ENCODE measurements at regions of chr20 and their contacts with region 1.

Region 1: GRCh38 chr20:7094438-7094997 is 327.0 kb downstream of the BMP2 start:
- DNase-seq: peak; percentile 60
- H3K4me3 Mint-ChIP-seq: no peak overlapping the region
- H3K27ac Mint-ChIP-seq: no peak overlapping the region
- H3K4me1 Mint-ChIP-seq: no peaks in the 10 kb centered on the region
- H3K27me3 Mint-ChIP-seq: no peaks in the 10 kb centered on the region
- CTCF ChIP-seq: peak; percentile 57

Region 2: DNA sequence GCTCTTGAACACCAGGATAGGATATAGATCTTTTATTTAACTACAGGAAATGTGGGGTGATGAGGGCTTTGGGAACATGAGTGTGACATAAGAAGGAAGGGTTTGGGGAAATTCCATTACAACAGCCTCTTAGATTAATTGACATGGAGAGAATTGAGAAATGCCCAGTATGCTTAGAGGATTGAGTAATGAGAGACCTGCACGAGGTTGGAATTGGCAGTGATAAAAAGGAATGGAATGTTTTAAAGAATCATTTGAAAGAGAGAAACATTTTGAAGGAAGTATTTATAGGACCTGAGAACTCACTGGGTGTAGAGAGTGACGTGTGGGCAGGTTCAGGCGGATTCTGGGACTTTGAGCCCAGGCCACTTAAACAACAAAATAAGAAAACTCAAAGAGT is 100.1 kb before region 1 on chr20:
- CTCF ChIA-PET with region 1: no interaction called
- intact Hi-C with region 1: loop called (anchors 1 kb)
- DNase-seq: peak; percentile 25
- H3K4me3 Mint-ChIP-seq: peak overlapping the region; percentile 8
- H3K27ac Mint-ChIP-seq: peak overlapping the region; percentile 93
- H3K4me1 Mint-ChIP-seq: peaks cover 35% of the 10 kb centered on the region
- H3K27me3 Mint-ChIP-seq: no peaks in the 10 kb centered on the region
- CTCF ChIP-seq: no peak

Region 3: DNA sequence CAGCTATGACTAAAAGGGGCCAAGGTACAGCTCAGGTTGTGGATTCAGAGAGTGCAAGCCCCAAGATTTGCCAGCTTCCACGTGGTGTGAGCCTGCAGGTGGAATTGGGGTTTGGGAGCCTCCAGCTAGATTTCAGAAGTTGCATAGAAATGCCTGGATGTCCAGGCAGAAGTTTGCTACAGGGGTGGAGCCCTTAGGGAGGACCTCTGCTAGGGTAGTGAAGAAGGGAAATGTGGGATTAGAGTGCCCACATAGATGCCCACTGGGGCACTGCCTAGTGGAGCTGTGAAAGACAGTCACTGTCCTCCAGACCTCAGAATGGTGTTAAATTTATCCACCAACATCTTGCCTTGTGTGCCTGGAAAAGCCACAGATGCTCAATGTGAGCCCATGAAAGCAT is 71.9 kb before region 1 on chr20:
- CTCF ChIA-PET with region 1: no interaction called
- intact Hi-C with region 1: no loop called
- DNase-seq: no peak
- H3K4me3 Mint-ChIP-seq: no peak overlapping the region
- H3K27ac Mint-ChIP-seq: no peak overlapping the region
- H3K4me1 Mint-ChIP-seq: no peaks in the 10 kb centered on the region
- H3K27me3 Mint-ChIP-seq: no peaks in the 10 kb centered on the region
- CTCF ChIP-seq: no peak

Measured in Calu3 (cell line).